ENCODE measurements at regions of chr3 and their contacts with region 1.

Region 1: GRCh38 chr3:98994128-98994762 is 92.8 kb upstream of the DCBLD2 start:
- DNase-seq: no peak
- ATAC-seq: no peak

Region 2: DNA sequence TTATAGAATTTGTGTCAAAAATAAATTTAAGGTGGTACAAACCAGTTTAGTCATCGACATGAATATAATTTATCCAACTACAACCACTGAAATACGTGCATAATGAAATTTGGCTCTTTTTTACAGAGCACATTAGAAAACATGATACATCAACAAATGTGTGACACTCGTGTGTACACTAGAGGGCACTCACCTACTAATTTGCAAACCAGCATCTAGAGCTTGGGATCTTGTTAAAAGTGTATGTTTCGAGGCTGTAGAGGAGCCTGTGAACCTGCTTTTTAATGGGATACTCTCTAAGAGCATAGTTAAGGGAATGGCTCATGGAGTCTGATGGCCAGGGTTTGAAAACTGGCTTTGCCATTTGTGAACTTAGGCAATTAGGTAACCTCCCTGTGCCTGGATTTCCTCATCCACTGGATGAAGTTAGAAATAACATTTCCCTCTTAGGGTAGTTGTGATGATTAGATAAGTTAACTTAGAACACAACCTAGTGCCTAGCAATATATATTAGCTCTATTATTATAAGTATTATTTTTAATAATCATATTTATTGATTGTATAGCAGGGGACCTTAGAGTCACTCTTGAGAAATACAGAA is 392.1 kb before region 1 on chr3:
- intact Hi-C with region 1: loop called (anchors 5 to 10 kb)
- DNase-seq: no peak
- ATAC-seq: peak; percentile 71

Region 3: GRCh38 chr3:98817547-98818041 is 176.7 kb before region 1 on chr3:
- intact Hi-C with region 1: loop called (anchors 5 to 10 kb)
- DNase-seq: no peak
- ATAC-seq: peak; percentile 73

Region 4: DNA sequence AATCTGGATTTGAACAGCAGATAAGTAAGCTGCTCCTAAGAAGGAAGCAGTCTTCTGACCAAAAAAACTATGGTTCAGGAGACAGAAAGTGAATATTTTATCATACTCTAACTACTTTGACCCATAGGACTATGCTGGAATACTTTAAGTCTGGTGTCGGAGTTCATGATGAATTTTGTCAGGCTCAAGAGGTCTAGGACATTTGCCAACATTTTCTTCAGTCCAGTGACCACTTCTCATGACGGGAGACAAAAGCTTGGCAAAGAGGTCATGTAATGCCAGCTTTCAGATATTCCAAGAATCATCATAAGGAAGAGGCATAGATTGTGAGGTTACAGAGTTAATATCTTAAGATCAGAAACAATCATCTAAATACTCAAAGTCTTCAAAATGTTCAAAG is 72.3 kb before region 1 on chr3:
- intact Hi-C with region 1: loop called in 1 of 2 experiments (anchors 5 kb)
- DNase-seq: no peak
- ATAC-seq: no peak